ENCODE measurements at regions of chr1 and their contacts with region 1.

Region 1: DNA sequence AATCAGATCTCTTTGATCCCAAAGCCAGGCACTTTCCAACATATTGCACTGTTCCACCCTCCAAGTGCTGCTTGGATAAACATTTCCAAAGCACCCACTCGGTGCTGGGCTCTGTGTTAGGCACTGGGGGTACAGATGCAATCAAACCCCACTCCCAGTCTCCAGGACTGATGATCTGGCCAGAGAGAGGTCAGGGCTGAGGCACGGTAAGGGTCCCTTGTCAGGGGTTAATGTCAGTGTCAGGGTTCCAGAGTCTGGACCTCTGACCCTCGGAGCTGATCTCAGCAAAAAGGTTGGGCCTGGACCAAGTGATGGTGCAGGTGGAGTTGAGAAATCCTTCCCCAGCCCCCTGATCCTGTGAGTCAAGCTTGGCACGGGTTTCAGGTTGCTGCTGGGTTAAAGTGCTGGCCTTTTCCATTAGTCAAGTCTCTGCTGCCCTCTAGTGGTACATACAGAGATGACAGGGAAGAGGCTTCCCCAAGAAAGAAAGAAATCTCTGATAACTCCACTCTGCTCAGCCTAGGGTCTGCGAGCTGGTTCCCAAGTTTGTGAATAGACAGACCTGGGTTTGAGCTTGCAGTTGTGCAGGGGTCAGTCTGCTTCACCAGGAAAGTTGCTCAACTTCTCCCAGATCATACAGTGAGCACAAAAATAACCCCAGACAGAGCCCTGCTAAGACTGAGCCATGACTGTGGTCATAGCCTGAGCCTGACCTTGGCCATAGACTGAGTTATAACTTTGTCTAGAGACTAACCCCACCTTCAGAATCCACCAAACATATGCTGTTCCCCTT is 74.6 kb downstream of the DMRTA2 start:
- DNase-seq: peak; percentile 48
- ATAC-seq: peak; percentile 92
- H3K4me3 ChIP-seq: no peak overlapping the region
- H3K27ac ChIP-seq: no peak overlapping the region
- H3K4me1 ChIP-seq: no peaks in the 10 kb centered on the region
- H3K27me3 ChIP-seq: peaks cover 3% of the 10 kb centered on the region; the same call in 1 of the 2 replicates
- CTCF ChIP-seq: peak; percentile 69 to 87 (median 79)
- POLR2A ChIP-seq: no peak
- RAD21 ChIP-seq: peak; percentile 87

Region 2: DNA sequence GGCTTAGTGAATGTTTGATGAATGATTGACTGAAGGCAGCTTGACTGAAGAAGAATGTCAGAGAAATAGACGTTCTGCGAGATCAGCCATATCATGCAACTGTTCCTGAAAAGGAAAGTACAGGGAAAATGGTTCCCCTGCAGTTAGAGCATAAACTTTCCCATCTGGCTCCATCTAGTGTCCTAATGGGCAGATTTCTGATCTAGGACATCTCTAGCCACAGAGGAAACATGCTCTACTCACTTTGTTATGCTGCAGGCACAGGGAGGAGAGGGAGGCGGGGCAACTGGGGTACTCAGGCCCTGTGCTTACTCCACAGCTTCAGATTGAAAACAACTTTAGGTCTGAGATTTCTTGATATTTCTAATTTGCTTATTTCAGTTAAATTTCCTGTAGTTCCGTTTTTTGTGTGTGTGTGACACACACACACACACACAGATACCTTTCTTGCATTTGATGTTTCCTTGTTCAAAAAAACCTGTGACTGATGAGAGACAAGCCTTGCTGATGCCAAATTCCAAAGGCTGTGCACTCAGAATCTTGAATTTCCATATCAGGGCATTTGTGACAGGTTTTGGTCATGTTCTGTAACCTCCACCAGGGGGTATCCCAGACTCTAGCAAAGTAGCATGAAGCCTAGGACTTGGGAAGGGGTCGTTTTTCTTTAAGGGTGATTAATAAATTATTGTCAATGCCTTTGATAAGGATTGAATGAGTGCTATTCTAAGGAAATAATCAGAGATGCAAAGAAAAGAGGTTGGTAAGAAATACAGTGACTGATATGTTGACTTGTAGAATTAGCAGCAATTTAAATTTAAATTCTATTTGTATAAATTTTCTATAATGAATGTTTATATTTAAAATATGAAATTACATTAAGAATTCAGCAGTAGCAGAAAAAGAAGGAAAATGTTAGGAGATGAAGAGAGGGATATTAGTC is 1432.2 kb before region 1 on chr1:
- CTCF ChIA-PET with region 1: no interaction called
- POLR2A ChIA-PET with region 1: no interaction called
- RAD21 ChIA-PET with region 1: no interaction called
- intact Hi-C with region 1: loop called (anchors 1 kb)
- DNase-seq: peak; percentile 8
- ATAC-seq: peak; percentile 71
- H3K4me3 ChIP-seq: no peak overlapping the region
- H3K27ac ChIP-seq: no peak overlapping the region
- H3K4me1 ChIP-seq: no peaks in the 10 kb centered on the region
- H3K27me3 ChIP-seq: no peaks in the 10 kb centered on the region
- CTCF ChIP-seq: peak in 2 of 3 experiments; percentile 51 to 54; a peak in 4 of 6 replicates
- POLR2A ChIP-seq: no peak
- RAD21 ChIP-seq: peak; percentile 42

Region 3: GRCh38 chr1:50332941-50333594 is 15.6 kb before region 1 on chr1:
- CTCF ChIA-PET with region 1: interaction called, 10 read pairs
- POLR2A ChIA-PET with region 1: no interaction called
- RAD21 ChIA-PET with region 1: no interaction called
- intact Hi-C with region 1: no loop called
- DNase-seq: no peak
- ATAC-seq: peak; percentile 90
- H3K4me3 ChIP-seq: peak overlapping the region; percentile 54 to 65
- H3K27ac ChIP-seq: peak overlapping the region; percentile 59; the same call in 1 of the 2 replicates
- H3K4me1 ChIP-seq: peaks cover 3 to 13% of the 10 kb centered on the region in 2 experiments; a peak in 2 of 4 replicates
- H3K27me3 ChIP-seq: peaks cover 31% of the 10 kb centered on the region; the same call in 1 of the 2 replicates
- CTCF ChIP-seq: peak; percentile 71 to 95 (median 72)
- POLR2A ChIP-seq: no peak
- RAD21 ChIP-seq: peak; percentile 82